GM10248 (cell line): ENCODE measurements at regions of chr3 and their contacts with region 1.

Region 1: GRCh38 chr3:169863458-169863899 is 6.3 kb downstream of the LRRC31 start:
- DNase-seq: peak; percentile 66
- CTCF ChIP-seq: peak; percentile 86

Region 2: DNA sequence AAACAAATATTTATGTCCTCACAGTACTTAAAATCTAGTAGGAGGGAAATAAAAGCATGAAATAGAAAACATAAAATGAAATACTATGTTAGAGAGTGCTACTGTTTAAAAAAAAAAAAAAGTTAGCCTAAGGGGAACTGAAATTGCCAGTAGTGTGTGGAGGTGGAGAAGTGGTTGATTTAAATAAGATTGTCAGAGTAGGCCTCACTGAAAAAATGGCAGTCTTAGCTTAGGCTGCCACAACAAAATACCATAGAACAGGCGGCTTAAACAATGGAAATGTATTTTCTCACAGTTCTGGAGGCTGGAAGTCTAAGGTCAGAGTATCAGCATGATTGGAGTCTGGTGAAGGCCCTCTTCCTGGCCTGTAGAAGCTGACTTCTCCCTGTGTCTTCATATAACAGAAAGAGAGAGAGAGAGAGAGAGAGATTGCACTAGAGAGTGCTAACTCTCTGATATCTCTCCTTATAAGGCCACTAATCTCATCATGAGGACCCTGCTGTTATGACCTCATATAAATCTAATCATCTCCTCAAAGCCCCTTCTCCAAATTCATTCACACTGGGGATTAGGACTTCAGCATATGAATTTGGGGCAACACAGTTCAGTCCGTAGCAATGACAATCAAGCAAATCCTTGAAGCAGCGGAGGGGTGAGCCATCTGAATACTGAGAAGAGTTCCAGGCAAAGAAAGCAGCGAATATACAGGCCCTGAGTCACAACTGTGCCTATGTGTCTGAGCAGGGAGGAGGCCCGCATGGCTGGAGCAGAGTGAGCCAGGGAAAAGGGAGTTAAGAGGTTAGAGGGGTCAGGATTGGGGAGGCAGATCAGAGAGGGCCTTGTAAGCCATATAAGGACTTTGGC is 27.2 kb before region 1 on chr3:
- CTCF ChIA-PET with region 1: interaction called, 13 read pairs
- POLR2A ChIA-PET with region 1: no interaction called
- DNase-seq: peak; percentile 66
- CTCF ChIP-seq: no peak

Region 3: GRCh38 chr3:169842960-169843359 is 20.5 kb before region 1 on chr3:
- CTCF ChIA-PET with region 1: interaction called, 13 read pairs
- POLR2A ChIA-PET with region 1: no interaction called
- DNase-seq: no peak
- CTCF ChIP-seq: no peak